GM10248 (cell line): ENCODE measurements at regions of chr18 and their contacts with region 1.

Region 1: DNA sequence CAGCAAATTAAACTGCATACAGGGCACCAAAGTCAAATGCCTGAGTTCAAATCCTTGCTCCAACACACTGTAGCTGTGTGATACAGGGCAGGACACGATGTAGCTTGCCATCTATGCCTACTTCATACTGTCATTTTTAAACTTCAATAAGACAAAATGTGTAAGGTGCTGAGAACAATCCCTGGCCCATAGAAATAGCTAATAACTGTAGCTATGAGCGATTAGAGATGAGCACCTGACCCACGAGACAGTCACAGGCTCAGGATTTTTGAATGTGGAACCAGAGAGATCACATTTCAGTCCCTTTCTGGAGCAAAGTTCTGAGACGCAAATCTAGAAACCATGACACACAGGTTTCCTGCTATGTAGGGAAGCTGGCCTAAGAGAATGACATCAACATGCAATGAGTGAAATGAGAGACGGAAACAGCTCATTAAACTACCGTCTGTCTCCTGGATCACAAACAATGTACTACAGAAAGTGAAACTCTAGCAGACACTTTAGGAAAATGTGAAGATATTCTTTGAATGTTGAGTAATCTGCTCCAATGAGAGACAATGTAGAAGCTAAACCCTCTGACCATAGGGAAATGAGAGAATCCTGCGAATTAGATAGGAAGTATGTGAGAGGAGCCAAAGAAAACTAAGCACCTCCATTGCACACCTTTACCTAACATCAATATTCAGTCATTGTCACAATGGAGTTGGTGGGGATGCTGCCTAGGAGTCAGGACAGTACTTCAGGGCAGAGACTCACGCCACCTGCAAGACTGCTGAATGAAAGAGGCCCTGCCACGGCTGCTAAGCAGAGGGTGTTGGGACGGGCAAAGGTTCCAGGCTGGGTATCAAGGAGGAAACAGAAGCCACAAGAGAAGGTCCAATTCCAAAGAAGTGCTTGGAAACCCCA is 25.5 kb downstream of the B4GALT6 start:
- DNase-seq: peak; percentile 60
- CTCF ChIP-seq: no peak

Region 2: DNA sequence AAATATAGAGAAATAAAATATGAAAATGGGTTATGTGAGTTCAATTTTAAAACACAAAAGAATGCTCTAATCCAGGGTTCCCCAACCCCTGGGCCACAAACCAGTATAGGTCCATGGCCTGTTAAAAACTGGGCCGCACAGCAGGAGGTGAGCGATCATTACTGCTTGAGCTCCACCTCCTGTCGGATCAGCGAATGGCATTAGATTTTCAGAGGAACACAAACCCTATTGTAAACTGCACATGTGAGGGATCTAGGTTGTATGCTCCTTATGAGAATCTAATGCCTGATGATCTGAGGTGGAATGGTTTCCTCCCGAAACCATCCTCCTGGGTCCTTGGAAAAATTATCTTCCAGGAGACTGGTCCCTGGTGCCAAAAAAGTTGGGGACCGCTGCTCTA is 32.5 kb before region 1 on chr18:
- CTCF ChIA-PET with region 1: no interaction called
- POLR2A ChIA-PET with region 1: no interaction called
- DNase-seq: no peak
- CTCF ChIP-seq: no peak

Region 3: DNA sequence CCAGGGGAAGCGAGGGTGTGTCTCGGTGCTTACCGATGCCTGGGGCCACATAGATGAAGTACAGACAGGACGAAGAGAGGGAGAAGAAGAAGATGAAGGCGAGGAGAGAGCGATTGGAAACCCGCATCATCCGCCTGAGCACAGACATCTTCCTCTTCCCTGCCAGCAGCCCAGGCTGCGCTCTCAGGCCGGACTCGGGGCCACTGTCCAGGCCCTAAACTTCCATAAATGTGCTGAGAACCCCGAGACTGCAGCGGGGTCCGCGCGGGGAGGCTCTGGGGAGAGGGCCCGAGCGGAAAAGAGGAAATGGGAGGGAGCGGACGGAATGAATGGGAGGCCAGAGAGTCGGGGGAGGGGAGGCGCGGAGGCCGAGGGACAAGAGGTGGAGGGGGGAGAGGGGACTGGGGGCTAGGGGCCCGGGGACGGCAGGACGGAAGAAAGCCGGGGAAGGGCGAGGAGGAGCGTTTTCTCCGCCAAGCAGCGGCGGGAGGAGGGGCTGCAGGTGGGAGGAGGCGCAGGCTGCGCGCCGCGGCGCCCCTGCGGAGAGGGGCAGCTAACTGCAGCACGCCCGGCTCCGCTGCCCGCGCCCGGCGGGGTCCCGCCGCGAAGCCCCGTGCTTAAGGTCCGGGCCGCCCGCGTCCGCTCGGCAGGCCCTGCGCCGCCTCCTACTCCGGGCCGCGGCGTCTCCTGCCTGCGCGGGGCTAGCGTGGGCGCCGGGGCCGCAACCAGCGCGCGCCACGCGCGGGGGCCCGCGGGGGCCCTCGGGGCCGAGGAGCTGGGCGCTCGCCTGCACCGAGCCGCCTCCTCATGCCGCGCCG is 25.6 kb after region 1 on chr18 and contains the start of gene B4GALT6:
- CTCF ChIA-PET with region 1: interaction called, 60 read pairs
- POLR2A ChIA-PET with region 1: no interaction called
- DNase-seq: peak; percentile 73
- CTCF ChIP-seq: peak; percentile 4